A549 (cell line): ENCODE measurements at regions of chr17 and their contacts with region 1.

Region 1: DNA sequence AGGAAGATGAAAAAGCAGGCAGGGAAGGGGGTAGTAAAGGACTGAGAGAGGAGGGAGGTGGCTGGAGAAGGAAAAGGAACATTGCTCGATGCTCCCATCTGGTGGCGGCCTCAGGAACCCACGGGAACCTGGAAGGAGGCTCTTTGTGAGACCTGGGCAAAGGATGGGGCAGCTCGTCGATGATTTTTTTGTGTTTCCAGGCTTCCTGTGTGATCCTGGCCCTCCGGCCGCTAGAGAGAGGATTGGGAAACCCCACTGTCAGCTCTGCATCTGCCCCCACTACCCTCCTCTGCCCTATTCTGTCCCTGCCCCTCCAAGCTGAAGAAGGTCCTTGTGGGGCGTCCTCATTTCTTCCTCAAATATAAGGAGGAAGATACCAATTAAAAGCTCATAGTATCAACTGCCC is 6.6 kb downstream of the WFIKKN2 start:
- DNase-seq: peak; percentile 76 to 94
- ATAC-seq: peak; percentile 85 to 94
- H3K4me3 ChIP-seq: no peak overlapping the region
- H3K27ac ChIP-seq: 0 out of 6 replicates have a peak overlapping the region, but pooled peaks of 1 of the 2 experiments have one; percentile 17
- H3K4me1 ChIP-seq: peaks cover 13% of the 10 kb centered on the region
- CTCF ChIP-seq: peak; percentile 93
- EP300 ChIP-seq: no peak
- POLR2A ChIP-seq: no peak
- RAD21 ChIP-seq: peak; percentile 93 to 94

Region 2: DNA sequence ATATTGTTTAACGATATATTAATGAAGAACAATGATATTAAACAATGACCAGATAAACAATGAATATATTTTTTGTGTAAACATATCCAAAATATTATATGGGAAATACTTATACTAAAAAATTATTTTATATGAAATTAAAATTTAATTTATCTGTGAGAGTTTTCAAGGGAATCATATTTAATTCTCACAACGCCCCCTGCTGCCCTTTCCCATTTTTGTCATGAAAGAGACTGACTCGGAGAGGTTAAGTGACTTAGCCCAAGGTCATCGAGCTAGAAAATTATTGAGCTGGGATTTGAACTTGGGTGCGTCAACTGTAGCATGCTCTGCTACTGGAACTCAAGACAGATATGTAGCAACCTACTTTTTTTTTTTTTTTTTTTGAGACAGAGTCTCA is 340.9 kb before region 1 on chr17:
- CTCF ChIA-PET with region 1: interaction called, 10 read pairs
- POLR2A ChIA-PET with region 1: no interaction called
- DNase-seq: peak in 1 of 2 experiments; percentile 54
- ATAC-seq: peak in 1 of 2 experiments; percentile 9; a peak in 1 of 6 replicates
- H3K4me3 ChIP-seq: no peak overlapping the region
- H3K27ac ChIP-seq: no peak overlapping the region
- H3K4me1 ChIP-seq: peaks cover 5% of the 10 kb centered on the region; the same call in 1 of the 3 replicates
- CTCF ChIP-seq: peak; percentile 64
- EP300 ChIP-seq: no peak
- POLR2A ChIP-seq: no peak
- RAD21 ChIP-seq: peak; percentile 32 to 35; a peak in 2 of 5 replicates

Region 3: GRCh38 chr17:50697663-50698274 is 144.2 kb before region 1 on chr17:
- CTCF ChIA-PET with region 1: interaction called, 15 read pairs
- POLR2A ChIA-PET with region 1: no interaction called
- DNase-seq: peak in 1 of 2 experiments; percentile 61
- ATAC-seq: no peak
- H3K4me3 ChIP-seq: no peak overlapping the region
- H3K27ac ChIP-seq: peak overlapping the region; percentile 97 to 98
- H3K4me1 ChIP-seq: peaks cover 98% of the 10 kb centered on the region
- CTCF ChIP-seq: peak; percentile 64
- EP300 ChIP-seq: no peak
- POLR2A ChIP-seq: no peak
- RAD21 ChIP-seq: peak; percentile 79 to 80

Region 4: DNA sequence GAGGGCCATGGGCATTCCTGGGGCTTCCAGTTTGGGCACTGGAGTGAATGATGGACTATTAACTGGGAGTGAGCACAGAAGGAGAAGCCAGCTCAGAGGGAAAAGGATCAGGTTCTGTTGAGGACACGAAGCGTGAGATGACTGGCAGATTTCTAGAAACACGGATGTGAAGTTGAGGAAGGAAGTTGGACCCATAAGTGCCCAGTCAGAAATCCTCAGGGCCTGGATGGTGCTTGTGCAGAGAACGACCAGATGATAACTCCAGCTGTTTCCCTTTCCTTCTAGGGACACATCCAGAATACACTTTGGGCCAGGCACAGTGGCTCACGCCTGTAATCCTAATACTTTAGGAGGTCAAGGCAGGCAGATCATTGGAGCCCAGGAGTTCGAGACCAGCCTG is 51.3 kb before region 1 on chr17:
- CTCF ChIA-PET with region 1: interaction called, 324 read pairs
- POLR2A ChIA-PET with region 1: no interaction called
- DNase-seq: no peak
- ATAC-seq: no peak
- H3K4me3 ChIP-seq: no peak overlapping the region
- H3K27ac ChIP-seq: no peak overlapping the region
- H3K4me1 ChIP-seq: no peaks in the 10 kb centered on the region
- CTCF ChIP-seq: no peak
- EP300 ChIP-seq: no peak
- POLR2A ChIP-seq: no peak
- RAD21 ChIP-seq: no peak

Region 5: DNA sequence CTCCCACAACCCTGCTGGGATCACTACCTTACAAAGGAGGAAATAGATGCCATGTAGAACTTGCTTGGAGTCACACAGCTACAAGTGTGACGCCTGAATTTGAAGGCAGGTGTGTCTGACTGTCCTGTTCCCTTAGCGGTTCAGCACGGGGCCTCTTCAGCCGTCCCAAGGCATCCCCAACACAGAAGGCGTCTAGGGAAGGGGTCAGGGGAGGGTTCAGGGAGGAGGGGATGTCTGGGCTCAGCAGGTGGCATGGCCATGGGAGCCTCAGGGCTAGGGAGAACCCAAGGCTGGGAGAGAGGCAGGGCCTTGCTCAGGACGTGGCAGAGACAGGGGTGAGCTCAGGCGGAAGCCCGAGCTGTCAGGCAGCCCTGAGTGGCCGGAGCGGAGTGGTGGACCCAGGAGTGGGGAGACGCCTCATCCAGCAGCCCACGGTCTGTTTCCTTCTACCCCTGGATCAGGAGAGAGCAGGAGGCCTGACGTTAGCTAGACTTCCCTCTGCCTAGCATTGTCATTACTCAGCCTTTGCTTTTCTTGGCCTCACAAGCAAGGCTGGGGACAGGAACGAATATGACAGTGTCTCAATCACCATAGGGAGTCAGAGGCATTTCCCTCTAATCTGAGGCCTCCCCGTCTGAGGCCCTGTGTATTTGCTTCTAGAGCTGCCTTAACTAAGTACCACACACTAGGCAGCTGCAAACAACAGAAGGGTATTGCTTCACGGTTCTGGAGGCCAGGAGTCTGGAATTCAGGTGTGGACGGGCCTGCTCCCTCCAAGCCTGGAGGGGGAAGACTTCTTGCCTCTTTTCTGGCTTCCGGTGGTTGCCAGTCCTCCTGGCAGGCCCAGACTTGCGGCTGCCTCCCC is 43.3 kb before region 1 on chr17:
- CTCF ChIA-PET with region 1: interaction called, 28 read pairs
- POLR2A ChIA-PET with region 1: no interaction called
- DNase-seq: no peak
- ATAC-seq: peak in 1 of 2 experiments; percentile 28; a peak in 2 of 6 replicates
- H3K4me3 ChIP-seq: no peak overlapping the region
- H3K27ac ChIP-seq: no peak overlapping the region
- H3K4me1 ChIP-seq: no peaks in the 10 kb centered on the region
- CTCF ChIP-seq: no peak
- EP300 ChIP-seq: no peak
- POLR2A ChIP-seq: no peak
- RAD21 ChIP-seq: no peak

Region 6: GRCh38 chr17:50816771-50817751 is 24.9 kb before region 1 on chr17:
- CTCF ChIA-PET with region 1: interaction called, 162 read pairs
- POLR2A ChIA-PET with region 1: no interaction called
- DNase-seq: peak; percentile 43 to 75
- ATAC-seq: peak; percentile 80 to 87
- H3K4me3 ChIP-seq: no peak overlapping the region
- H3K27ac ChIP-seq: peak overlapping the region in 1 of 2 experiments; percentile 7; a peak in 1 of 6 replicates
- H3K4me1 ChIP-seq: peaks cover 8% of the 10 kb centered on the region
- CTCF ChIP-seq: peak; percentile 91
- EP300 ChIP-seq: no peak
- POLR2A ChIP-seq: no peak
- RAD21 ChIP-seq: peak; percentile 49 to 52

Region 7: DNA sequence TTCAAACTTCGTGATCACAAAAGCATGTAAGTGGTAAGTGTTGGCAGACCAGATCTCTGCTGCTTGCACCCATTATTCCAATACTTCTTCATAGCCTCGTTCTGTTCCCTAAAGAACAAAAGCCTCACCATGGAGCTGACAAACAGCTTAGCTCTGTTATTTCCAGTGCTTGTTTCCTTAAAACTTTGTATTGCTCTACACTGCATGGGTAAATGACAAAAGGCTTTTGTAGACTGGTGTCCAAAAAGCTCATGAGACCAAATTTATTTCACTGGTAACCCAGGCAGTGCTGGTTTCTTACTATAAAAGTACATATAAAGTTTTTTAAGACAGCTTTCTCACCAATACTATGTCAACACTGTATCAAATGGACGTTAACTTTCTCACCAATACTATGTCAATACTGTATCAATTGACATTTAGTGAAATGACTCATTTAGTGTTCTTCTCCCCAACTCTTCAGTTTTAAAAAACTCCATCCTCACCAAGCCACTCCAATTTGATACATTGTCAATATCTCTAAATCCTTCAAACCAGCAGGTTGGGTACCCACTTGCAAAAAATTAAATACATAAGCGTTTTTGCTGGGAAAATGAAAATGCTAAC is 19.2 kb after region 1 on chr17:
- CTCF ChIA-PET with region 1: interaction called, 197 read pairs
- POLR2A ChIA-PET with region 1: interaction called, 12 read pairs
- DNase-seq: no peak
- ATAC-seq: no peak
- H3K4me3 ChIP-seq: 0 out of 3 replicates have a peak overlapping the region, but pooled peaks have one; percentile 92
- H3K27ac ChIP-seq: no peak overlapping the region
- H3K4me1 ChIP-seq: peaks cover 34% of the 10 kb centered on the region
- CTCF ChIP-seq: no peak
- EP300 ChIP-seq: no peak
- POLR2A ChIP-seq: no peak
- RAD21 ChIP-seq: no peak

Region 8: DNA sequence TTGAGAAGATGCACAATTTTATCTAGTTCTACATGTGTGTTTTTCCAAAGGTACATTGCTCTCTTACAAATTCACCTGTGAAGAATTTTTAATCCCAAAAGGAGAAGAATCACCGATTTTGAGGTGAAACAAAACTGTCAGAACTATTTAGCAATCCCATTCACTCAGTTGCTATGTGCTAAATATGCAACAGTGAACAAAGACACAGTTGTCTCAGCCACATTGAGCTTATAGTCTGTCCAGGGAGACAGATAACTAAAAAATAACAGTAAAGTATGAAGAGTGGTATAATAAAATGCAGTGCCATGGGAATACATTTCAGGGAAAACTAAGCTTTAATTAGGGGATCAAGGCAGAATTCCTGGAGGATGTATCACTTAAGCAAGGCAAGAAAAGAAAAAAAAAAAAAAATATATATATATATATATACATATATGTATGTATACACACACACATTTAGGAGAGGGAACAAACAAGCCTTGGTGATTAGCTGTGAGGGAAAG is 168.3 kb after region 1 on chr17:
- CTCF ChIA-PET with region 1: no interaction called
- POLR2A ChIA-PET with region 1: no interaction called
- DNase-seq: no peak
- ATAC-seq: no peak
- H3K4me3 ChIP-seq: no peak overlapping the region
- H3K27ac ChIP-seq: no peak overlapping the region
- H3K4me1 ChIP-seq: no peaks in the 10 kb centered on the region
- CTCF ChIP-seq: no peak
- EP300 ChIP-seq: no peak
- POLR2A ChIP-seq: no peak
- RAD21 ChIP-seq: no peak